HCT116 (cell line): ENCODE measurements at regions of chr12 and their contacts with region 1.

Region 1: GRCh38 chr12:2853626-2854025 is 3.2 kb downstream of the TEX52 start:
- DNase-seq: peak; percentile 28
- ATAC-seq: peak; percentile 90
- H3K4me3 ChIP-seq: no peak overlapping the region
- H3K27ac ChIP-seq: no peak overlapping the region
- H3K4me1 ChIP-seq: peaks cover 3 to 4% of the 10 kb centered on the region in 2 experiments; a peak in 3 of 4 replicates
- H3K27me3 ChIP-seq: no peaks in the 10 kb centered on the region
- CTCF ChIP-seq: peak; percentile 40 to 96 (median 79); a peak in 5 of 6 replicates
- POLR2A ChIP-seq: no peak
- RAD21 ChIP-seq: peak; percentile 46

Region 2: DNA sequence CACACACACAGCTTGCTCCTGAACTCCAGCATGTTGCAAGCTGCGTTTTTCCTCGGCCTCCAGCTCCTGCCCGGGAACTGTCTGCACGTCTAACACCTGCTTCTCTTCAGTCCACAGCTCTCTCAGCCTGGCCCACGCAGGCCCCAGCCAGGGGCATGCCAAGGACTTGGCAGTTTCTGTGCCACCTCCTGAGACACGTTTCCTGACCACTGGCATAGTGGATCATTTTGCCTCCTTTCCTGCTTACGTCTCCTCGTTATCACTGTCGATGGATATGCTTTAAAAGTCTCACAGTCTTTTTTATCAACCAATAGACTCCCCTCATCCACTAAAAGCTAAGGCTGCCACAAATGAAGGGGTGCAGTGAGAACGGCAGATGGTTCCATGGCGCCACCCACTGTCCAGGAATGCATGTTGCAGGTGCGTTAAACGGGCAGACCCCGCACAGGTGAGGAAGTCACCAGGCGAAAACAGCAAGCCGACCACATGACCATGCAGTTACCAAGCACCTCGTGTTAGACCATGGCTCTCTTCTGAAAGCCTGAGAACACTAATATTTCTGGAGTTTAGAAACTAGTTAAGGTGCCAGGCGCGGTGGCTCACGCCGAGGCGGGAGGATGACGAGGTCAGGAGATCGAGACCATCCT is 90.9 kb after region 1 on chr12:
- CTCF ChIA-PET with region 1: interaction called, 5 read pairs
- POLR2A ChIA-PET with region 1: no interaction called
- RAD21 ChIA-PET with region 1: no interaction called
- intact Hi-C with region 1: loop called (anchors 1 kb)
- DNase-seq: peak; percentile 34
- ATAC-seq: peak; percentile 95
- H3K4me3 ChIP-seq: no peak overlapping the region
- H3K27ac ChIP-seq: no peak overlapping the region
- H3K4me1 ChIP-seq: peaks cover 2 to 11% of the 10 kb centered on the region in 2 experiments; a peak in 2 of 4 replicates
- H3K27me3 ChIP-seq: no peaks in the 10 kb centered on the region
- CTCF ChIP-seq: peak; percentile 86 to 97 (median 92)
- POLR2A ChIP-seq: no peak
- RAD21 ChIP-seq: peak; percentile 84

Region 3: GRCh38 chr12:3034067-3034750 is 180.6 kb after region 1 on chr12:
- CTCF ChIA-PET with region 1: interaction called, 6 read pairs
- POLR2A ChIA-PET with region 1: no interaction called
- RAD21 ChIA-PET with region 1: no interaction called
- intact Hi-C with region 1: loop called (anchors 2 kb)
- DNase-seq: peak; percentile 31
- ATAC-seq: peak; percentile 97
- H3K4me3 ChIP-seq: no peak overlapping the region
- H3K27ac ChIP-seq: no peak overlapping the region; the same call in 1 of the 2 replicates
- H3K4me1 ChIP-seq: peaks cover 0 to 4% of the 10 kb centered on the region in 2 experiments; a peak in 1 of 4 replicates
- H3K27me3 ChIP-seq: no peaks in the 10 kb centered on the region
- CTCF ChIP-seq: peak; percentile 36 to 78 (median 75); a peak in 5 of 6 replicates
- POLR2A ChIP-seq: no peak
- RAD21 ChIP-seq: peak; percentile 66